Activated CD4-positive, alpha-beta T cell treated with anti-CD3 and anti-CD28 coated beads, Interleukin-2, amount 10 ng/mL, durations not matched to agents 24 days and 14 days (primary cell): ENCODE measurements at regions of chr3 and their contacts with region 1.

Region 1: GRCh38 chr3:66816090-66816761 is 181.9 kb upstream of the KBTBD8 start:
- DNase-seq: peak; percentile 66
- H3K4me3 Mint-ChIP-seq: no peak overlapping the region
- H3K27ac Mint-ChIP-seq: no peak overlapping the region
- H3K4me1 Mint-ChIP-seq: no peaks in the 10 kb centered on the region
- H3K27me3 Mint-ChIP-seq: peaks cover 9% of the 10 kb centered on the region

Region 2: GRCh38 chr3:66276705-66277274 is 539.4 kb before region 1 on chr3:
- intact Hi-C with region 1: loop called (anchors 1 kb)
- DNase-seq: peak; percentile 90
- H3K4me3 Mint-ChIP-seq: no peak overlapping the region
- H3K27ac Mint-ChIP-seq: no peak overlapping the region
- H3K4me1 Mint-ChIP-seq: peaks cover 7% of the 10 kb centered on the region
- H3K27me3 Mint-ChIP-seq: no peaks in the 10 kb centered on the region

Region 3: DNA sequence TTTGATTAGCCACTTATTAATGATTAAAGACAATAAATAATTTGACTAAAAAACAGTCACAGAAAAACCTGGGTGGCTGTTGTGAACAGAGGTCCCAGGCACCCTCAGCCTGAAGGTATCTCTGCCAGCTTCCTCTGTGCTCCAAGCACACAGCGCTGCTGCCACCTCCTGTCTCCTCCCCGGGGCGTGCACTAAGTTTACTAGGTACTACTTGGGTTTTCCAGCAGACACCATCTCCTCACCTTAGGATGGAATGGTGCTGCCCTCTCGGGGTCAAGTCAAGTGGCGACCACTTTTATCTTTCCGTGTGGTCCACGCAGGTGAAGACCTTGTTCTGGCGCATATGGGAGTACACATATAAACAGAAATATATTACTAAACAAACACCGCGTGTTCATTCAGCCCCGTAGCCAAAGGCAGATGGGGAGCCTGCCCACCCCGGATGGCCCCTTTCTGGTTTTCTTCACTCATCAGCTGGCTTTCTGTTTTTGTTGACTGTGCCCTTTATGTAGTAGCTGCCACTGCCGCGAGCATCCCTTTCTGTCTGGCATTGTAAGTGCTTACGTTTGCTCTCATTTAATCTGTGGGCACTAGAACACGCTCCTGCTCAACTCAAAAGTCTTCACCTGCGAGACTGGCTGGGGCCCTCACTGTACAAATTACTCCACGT is 443.4 kb before region 1 on chr3:
- intact Hi-C with region 1: loop called (anchors 10 kb)
- DNase-seq: peak; percentile 70
- H3K4me3 Mint-ChIP-seq: no peak overlapping the region
- H3K27ac Mint-ChIP-seq: no peak overlapping the region
- H3K4me1 Mint-ChIP-seq: peaks cover 2% of the 10 kb centered on the region
- H3K27me3 Mint-ChIP-seq: no peaks in the 10 kb centered on the region

Region 4: GRCh38 chr3:66407611-66408218 is 408.5 kb before region 1 on chr3:
- intact Hi-C with region 1: loop called (anchors 1 kb)
- DNase-seq: peak; percentile 93
- H3K4me3 Mint-ChIP-seq: no peak overlapping the region
- H3K27ac Mint-ChIP-seq: peak overlapping the region; percentile 60
- H3K4me1 Mint-ChIP-seq: peaks cover 8% of the 10 kb centered on the region
- H3K27me3 Mint-ChIP-seq: no peaks in the 10 kb centered on the region

Region 5: DNA sequence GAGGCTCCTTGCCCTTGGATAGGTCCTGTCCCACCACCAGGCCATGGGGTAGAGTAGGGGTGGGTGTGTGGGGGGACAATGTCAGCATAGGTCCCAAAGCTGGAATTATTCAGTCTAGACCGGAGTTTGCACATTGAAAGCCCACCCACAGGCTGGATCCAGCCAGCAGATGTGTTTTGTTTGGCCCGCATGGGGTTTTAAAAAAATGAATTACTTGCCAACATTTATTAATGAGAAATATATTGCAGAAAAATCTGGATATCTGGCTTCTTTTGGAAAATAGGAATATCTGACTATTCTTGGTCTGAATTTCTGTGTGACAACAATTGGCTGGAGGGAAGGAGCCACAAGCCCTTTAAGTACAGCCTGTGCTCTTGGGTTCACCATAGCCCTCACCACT is 298.1 kb before region 1 on chr3:
- intact Hi-C with region 1: loop called (anchors 10 kb)
- DNase-seq: no peak
- H3K4me3 Mint-ChIP-seq: no peak overlapping the region
- H3K27ac Mint-ChIP-seq: no peak overlapping the region
- H3K4me1 Mint-ChIP-seq: no peaks in the 10 kb centered on the region
- H3K27me3 Mint-ChIP-seq: peaks cover 24% of the 10 kb centered on the region